ENCODE measurements at regions of chr4 and their contacts with region 1.

Region 1: GRCh38 chr4:101527188-101527587 is 179.9 kb upstream of the PPP3CA start:
- DNase-seq: peak; percentile 84
- ATAC-seq: peak; percentile 100
- H3K4me3 Mint-ChIP-seq: no peak overlapping the region
- H3K27ac Mint-ChIP-seq: no peak overlapping the region
- H3K4me1 Mint-ChIP-seq: peaks cover 19% of the 10 kb centered on the region
- H3K27me3 Mint-ChIP-seq: peaks cover 47% of the 10 kb centered on the region

Region 2: DNA sequence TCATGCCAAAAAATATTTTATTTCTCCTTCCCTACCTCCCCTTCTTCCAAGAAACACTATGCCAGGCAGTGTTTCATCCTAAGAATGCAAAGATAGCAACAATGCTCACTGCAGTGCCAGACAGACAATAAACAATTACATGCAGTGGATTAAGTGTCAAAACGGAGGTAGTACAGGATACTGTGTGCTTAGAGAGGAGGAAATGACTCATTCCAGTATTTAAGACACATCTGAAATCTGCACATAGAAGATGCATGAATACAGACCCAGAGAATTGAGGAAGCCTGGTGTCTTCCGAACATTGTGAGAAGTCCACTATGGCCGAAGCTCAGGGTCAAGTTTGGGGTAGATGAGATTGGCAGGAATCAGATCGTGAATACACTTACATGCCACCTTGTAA is 506.2 kb before region 1 on chr4:
- CTCF ChIA-PET with region 1: no interaction called
- POLR2A ChIA-PET with region 1: no interaction called
- intact Hi-C with region 1: loop called in 1 of 2 experiments (anchors 1 kb)
- DNase-seq: no peak
- ATAC-seq: peak; percentile 70
- H3K4me3 Mint-ChIP-seq: no peak overlapping the region
- H3K27ac Mint-ChIP-seq: peak overlapping the region; percentile 64
- H3K4me1 Mint-ChIP-seq: peaks cover 50% of the 10 kb centered on the region
- H3K27me3 Mint-ChIP-seq: no peaks in the 10 kb centered on the region

Region 3: DNA sequence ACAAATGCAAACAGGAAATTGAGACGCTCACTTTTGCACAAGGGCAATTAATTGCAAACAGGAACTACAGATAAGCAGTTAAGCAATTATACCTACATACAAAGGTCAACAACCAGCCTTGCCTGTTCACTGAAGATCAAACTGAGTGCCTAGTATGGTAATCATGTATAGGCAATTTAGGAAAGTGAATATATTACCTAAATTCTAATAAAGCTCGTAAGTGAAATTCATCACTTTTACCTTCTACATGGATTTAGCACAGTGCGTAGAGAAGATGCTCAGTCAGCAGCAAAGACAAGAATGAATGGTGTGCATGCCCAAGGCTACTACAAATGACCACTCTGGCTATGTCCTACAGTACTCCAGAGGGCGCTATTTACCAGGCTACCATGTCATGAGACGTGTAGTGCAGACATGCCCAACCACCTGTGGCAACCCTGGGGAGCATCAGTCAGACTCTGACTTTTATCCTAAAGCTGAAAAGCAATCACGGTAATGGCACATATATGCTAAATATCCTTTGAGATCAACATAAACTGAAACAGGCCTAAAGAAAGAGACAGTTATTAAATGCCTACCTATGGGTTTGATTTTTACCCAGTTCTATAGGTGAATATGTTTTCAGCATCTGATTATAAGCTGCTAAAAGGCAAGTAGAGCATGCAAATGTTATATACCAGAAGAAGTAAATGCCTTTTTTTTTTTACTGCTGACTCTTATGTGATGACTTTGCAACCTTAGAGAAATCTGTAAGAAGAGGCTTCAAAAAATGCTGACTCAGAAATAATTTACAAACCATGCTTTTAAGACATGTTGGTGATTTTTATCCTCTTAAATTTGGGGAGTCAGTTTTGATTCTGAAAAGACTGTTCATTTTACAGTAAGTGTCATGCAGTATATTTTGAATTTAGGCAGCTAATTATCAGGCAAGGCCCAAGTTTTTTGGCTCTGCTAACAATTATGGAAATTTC is 357.9 kb before region 1 on chr4:
- CTCF ChIA-PET with region 1: no interaction called
- POLR2A ChIA-PET with region 1: no interaction called
- intact Hi-C with region 1: loop called (anchors 2 to 10 kb)
- DNase-seq: peak; percentile 76
- ATAC-seq: peak; percentile 99
- H3K4me3 Mint-ChIP-seq: no peak overlapping the region
- H3K27ac Mint-ChIP-seq: no peak overlapping the region
- H3K4me1 Mint-ChIP-seq: peaks cover 2% of the 10 kb centered on the region
- H3K27me3 Mint-ChIP-seq: no peaks in the 10 kb centered on the region

Region 4: GRCh38 chr4:101205916-101206315 is 321.3 kb before region 1 on chr4:
- CTCF ChIA-PET with region 1: no interaction called
- POLR2A ChIA-PET with region 1: no interaction called
- intact Hi-C with region 1: loop called in 1 of 2 experiments (anchors 1 kb)
- DNase-seq: peak; percentile 57
- ATAC-seq: peak; percentile 99
- H3K4me3 Mint-ChIP-seq: no peak overlapping the region
- H3K27ac Mint-ChIP-seq: no peak overlapping the region
- H3K4me1 Mint-ChIP-seq: peaks cover 29% of the 10 kb centered on the region
- H3K27me3 Mint-ChIP-seq: peaks cover 2% of the 10 kb centered on the region

Region 5: GRCh38 chr4:101328063-101328602 is 199.1 kb before region 1 on chr4:
- CTCF ChIA-PET with region 1: interaction called, 3 read pairs
- POLR2A ChIA-PET with region 1: no interaction called
- intact Hi-C with region 1: loop called (anchors 1 kb)
- DNase-seq: peak; percentile 27
- ATAC-seq: peak; percentile 90
- H3K4me3 Mint-ChIP-seq: peak overlapping the region; percentile 41
- H3K27ac Mint-ChIP-seq: peak overlapping the region; percentile 37
- H3K4me1 Mint-ChIP-seq: peaks cover 37% of the 10 kb centered on the region
- H3K27me3 Mint-ChIP-seq: peaks cover 24% of the 10 kb centered on the region

Region 6: DNA sequence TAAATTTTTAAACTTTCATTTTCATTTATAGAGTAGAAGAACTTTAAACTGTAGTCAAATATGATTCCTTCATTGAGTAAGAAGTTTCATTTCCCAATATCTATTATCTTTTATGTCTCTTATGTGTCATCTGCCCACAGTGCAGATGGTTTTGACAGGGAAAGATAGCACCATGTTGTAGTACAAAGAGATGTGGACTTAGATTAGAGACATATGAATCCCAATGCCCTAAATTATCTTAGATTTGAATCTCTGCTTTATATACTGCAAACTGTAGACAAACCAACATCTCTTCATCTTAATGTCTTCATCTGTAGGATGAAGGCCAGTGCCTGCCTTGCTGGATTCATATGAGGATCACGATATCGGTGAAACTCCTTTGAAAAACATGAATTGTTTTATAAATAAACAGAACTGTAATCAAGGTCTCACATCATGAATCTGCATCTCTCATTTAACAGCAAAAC is 480.8 kb after region 1 on chr4:
- CTCF ChIA-PET with region 1: no interaction called
- POLR2A ChIA-PET with region 1: no interaction called
- intact Hi-C with region 1: loop called (anchors 5 kb)
- DNase-seq: peak; percentile 20
- ATAC-seq: peak; percentile 95
- H3K4me3 Mint-ChIP-seq: no peak overlapping the region
- H3K27ac Mint-ChIP-seq: no peak overlapping the region
- H3K4me1 Mint-ChIP-seq: peaks cover 15% of the 10 kb centered on the region
- H3K27me3 Mint-ChIP-seq: peaks cover 2% of the 10 kb centered on the region

Region 7: DNA sequence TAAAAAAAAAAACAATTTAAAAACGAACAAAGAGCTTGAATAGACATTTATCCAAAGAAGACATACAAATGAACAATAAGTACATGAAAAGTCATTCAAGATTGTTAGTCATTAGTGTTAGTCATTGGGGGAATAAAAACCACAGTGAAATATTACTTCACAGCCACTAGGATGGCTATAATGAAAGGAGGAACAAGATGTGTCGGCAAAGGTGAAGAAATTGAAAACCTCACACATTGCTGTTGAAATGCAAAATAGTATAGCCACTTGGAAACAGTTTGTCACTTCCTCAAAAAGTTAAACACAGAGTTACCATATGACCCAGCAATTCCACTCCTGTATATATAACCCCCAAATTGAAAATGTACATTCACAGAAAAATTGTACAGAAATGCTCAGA is 863.2 kb after region 1 on chr4:
- CTCF ChIA-PET with region 1: no interaction called
- POLR2A ChIA-PET with region 1: no interaction called
- intact Hi-C with region 1: loop called in 1 of 2 experiments (anchors 5 kb)
- DNase-seq: no peak
- ATAC-seq: peak; percentile 98
- H3K4me3 Mint-ChIP-seq: no peak overlapping the region
- H3K27ac Mint-ChIP-seq: no peak overlapping the region
- H3K4me1 Mint-ChIP-seq: peaks cover 18% of the 10 kb centered on the region
- H3K27me3 Mint-ChIP-seq: peaks cover 13% of the 10 kb centered on the region

Measured in activated CD4-positive, alpha-beta T cell treated with anti-CD3 and anti-CD28 coated beads for 36 hours (primary cell).